Activated CD8-positive, alpha-beta memory T cell treated with anti-CD3 and anti-CD28 coated beads, Interleukin-2, amount 10 ng/mL, durations not matched to agents 7 days and 5 days (primary cell): ENCODE measurements at regions of chr20 and their contacts with region 1.

Region 1: DNA sequence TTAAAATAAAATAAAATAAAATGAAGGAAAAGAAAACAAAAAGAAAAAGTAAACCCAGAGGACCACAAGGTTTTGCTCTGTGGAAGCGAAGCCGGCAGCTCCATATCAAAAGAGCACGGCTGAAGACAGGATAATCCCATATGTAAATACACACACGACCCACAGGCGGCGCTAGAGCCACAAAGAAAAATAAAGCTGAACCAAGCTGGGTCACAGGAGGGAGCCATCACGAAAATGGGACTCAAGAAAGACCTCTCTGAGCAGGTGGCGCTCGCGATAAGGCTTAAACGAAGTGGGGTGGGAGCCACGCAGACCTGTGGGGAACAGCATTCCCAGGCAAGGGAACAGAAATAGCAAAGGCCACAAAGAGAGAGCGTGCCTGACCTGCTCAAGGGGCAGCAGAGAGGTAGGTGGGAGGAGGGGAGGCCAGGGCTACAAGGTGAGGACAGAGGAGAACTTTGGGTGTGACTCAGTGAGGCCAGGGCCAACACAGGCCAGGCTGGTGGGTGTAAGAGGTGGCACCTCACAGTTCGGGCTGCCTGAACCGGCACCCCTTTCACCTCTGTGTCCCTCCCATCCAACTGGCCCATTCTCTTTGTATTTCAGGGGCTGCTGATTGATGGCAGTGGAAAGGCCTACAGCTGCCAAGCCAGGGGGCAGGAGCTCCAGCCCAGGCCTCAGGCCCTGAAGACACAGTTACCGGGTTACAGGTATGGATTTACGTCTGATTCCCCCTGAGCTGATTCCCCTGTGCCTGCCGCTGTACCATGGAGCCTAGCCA is 26.0 kb downstream of the PTGIS start:
- DNase-seq: peak; percentile 87
- ATAC-seq: peak; percentile 88
- H3K4me3 Mint-ChIP-seq: no peak overlapping the region
- H3K27ac Mint-ChIP-seq: peak overlapping the region; percentile 89
- H3K4me1 Mint-ChIP-seq: peaks cover 19% of the 10 kb centered on the region
- H3K27me3 Mint-ChIP-seq: no peaks in the 10 kb centered on the region

Region 2: GRCh38 chr20:49303065-49303552 is 238.8 kb before region 1 on chr20:
- CTCF ChIA-PET with region 1: no interaction called
- DNase-seq: no peak
- ATAC-seq: no peak
- H3K4me3 Mint-ChIP-seq: no peak overlapping the region
- H3K27ac Mint-ChIP-seq: no peak overlapping the region
- H3K4me1 Mint-ChIP-seq: peaks cover 10% of the 10 kb centered on the region
- H3K27me3 Mint-ChIP-seq: no peaks in the 10 kb centered on the region

Region 3: GRCh38 chr20:49471397-49471796 is 70.5 kb before region 1 on chr20:
- CTCF ChIA-PET with region 1: no interaction called
- DNase-seq: no peak
- ATAC-seq: no peak
- H3K4me3 Mint-ChIP-seq: no peak overlapping the region
- H3K27ac Mint-ChIP-seq: no peak overlapping the region
- H3K4me1 Mint-ChIP-seq: no peaks in the 10 kb centered on the region
- H3K27me3 Mint-ChIP-seq: peaks cover 64% of the 10 kb centered on the region

Region 4: DNA sequence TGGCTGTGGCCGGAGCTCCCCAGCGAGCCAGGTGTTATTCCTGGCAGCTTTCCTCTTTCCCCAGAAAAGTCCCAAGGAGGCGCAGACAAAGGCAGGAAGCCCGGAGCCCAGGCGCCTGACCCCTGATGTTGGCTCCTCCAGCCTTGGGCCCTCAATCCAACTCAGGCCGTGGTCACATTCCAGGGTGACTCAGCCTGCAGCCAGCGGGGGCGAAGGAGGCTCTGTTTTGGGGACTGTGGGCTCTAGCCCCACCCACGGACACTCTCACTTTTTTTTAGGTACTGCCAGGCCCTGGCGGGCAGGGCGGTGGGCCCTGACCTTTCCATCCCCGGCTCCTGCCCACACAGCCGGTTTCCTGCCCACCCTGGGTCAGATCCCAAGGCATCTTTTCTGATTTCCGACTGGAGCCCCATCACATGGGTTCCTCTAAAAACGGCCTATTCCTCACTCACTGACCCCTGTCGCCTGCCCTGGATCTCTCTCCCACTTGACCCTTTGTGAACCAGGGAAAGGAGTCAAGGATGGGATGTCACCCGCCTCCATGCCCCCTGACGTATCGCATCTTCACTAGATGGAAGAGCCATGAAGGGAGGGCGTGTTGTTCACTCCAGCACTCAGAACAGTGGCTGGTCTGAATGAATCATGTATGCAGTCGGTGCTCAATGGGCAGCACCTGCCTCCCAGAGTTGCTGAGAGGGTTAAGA is 20.5 kb after region 1 on chr20:
- CTCF ChIA-PET with region 1: interaction called, 86 read pairs
- DNase-seq: no peak
- ATAC-seq: no peak
- H3K4me3 Mint-ChIP-seq: no peak overlapping the region
- H3K27ac Mint-ChIP-seq: no peak overlapping the region
- H3K4me1 Mint-ChIP-seq: peaks cover 17% of the 10 kb centered on the region
- H3K27me3 Mint-ChIP-seq: peaks cover 24% of the 10 kb centered on the region

Region 5: GRCh38 chr20:49567421-49568334 is 25.8 kb after region 1 on chr20 and contains the start of gene PTGIS:
- CTCF ChIA-PET with region 1: interaction called, 31 read pairs
- DNase-seq: no peak
- ATAC-seq: peak; percentile 76
- H3K4me3 Mint-ChIP-seq: peak within 1 kb of the TSS; percentile 44
- H3K27ac Mint-ChIP-seq: no peak within 1 kb of the TSS
- H3K4me1 Mint-ChIP-seq: peaks cover 28% of the 10 kb centered on the region
- H3K27me3 Mint-ChIP-seq: peaks cover 41% of the 10 kb centered on the region
- total RNA-seq, gene PTGIS: 3.8 to 15.1 TPM

Region 6: GRCh38 chr20:49575551-49576060 is 33.7 kb after region 1 on chr20:
- CTCF ChIA-PET with region 1: interaction called, 31 read pairs
- DNase-seq: no peak
- ATAC-seq: no peak
- H3K4me3 Mint-ChIP-seq: no peak overlapping the region
- H3K27ac Mint-ChIP-seq: no peak overlapping the region
- H3K4me1 Mint-ChIP-seq: peaks cover 61% of the 10 kb centered on the region
- H3K27me3 Mint-ChIP-seq: peaks cover 7% of the 10 kb centered on the region

Region 7: GRCh38 chr20:49583669-49584417 is 41.9 kb after region 1 on chr20:
- CTCF ChIA-PET with region 1: interaction called, 55 read pairs
- DNase-seq: no peak
- ATAC-seq: no peak
- H3K4me3 Mint-ChIP-seq: no peak overlapping the region
- H3K27ac Mint-ChIP-seq: no peak overlapping the region
- H3K4me1 Mint-ChIP-seq: peaks cover 38% of the 10 kb centered on the region
- H3K27me3 Mint-ChIP-seq: no peaks in the 10 kb centered on the region

Region 8: DNA sequence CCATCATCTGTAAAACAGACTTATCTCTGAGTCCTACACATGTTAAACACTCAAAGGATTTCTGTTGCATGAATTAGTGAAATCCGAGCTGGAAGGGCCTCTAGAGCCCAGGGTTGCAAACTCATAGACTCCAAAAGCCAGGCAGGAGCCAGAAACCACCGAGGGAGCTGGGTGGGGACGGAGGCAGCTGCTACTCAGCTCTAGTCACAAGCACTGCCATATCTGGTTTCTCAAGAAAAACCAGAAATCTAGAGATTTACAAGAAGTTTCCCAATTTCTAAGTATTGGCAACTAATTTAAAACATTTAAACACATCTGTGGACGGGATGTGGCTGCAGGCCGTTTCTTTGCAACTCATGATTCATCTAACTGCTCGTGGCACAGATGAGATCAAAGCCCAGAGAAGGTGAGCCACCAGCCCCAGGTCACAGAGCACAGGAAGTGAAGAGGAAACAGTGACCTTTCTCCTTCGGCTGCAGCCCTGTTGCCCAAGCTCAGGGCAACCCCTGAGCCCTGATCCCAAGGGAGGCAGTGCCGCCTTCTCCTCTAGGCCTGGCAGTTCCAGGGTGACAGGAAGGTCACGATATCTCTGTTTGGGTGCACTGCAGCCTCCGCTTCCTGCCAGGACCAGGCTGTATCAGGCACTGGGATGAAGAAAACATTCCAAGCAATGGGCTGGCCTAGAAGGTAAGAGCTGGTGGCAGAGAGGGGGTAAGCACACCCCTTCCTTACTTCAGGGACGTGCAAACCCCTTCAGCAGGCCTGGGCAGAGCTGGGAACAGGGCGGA is 52.4 kb after region 1 on chr20:
- CTCF ChIA-PET with region 1: interaction called, 559 read pairs
- DNase-seq: peak; percentile 96
- ATAC-seq: peak; percentile 66
- H3K4me3 Mint-ChIP-seq: peak overlapping the region; percentile 94
- H3K27ac Mint-ChIP-seq: peak overlapping the region; percentile 99
- H3K4me1 Mint-ChIP-seq: peaks cover 88% of the 10 kb centered on the region
- H3K27me3 Mint-ChIP-seq: no peaks in the 10 kb centered on the region

Region 9: DNA sequence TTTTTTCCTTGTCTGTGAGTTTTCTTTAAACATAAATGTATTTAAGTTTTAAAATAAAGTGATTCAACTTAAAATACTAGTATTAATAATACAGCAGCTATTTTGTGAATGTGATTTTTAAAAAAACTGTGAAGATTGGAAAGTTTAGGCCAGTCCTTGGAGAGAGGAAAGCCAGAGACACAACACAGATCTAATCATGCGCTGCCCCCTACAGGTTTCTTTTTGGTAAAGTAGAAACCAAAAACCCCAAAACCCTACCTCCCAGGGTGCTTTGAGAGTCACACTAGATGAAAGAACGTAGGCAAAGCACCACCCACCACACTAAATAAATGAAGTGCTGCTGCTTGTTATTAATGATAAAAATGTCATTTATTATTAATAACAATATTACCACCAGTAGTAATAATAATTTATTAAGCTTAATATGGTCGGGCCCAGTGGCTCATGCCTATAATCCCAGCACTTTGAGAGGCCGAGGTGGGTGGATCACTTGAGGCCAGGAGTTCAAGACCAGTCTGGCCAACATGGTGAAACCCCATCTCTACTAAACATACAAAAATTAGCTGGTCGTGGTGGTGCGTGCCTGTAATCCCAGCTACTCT is 304.4 kb after region 1 on chr20:
- CTCF ChIA-PET with region 1: interaction called, 31 read pairs
- DNase-seq: peak; percentile 64
- ATAC-seq: peak; percentile 80
- H3K4me3 Mint-ChIP-seq: no peak overlapping the region
- H3K27ac Mint-ChIP-seq: no peak overlapping the region
- H3K4me1 Mint-ChIP-seq: peaks cover 8% of the 10 kb centered on the region
- H3K27me3 Mint-ChIP-seq: no peaks in the 10 kb centered on the region